ENCODE measurements at regions of chr7 and their contacts with region 1.

Region 1: GRCh38 chr7:17646253-17646956 is 293.9 kb downstream of the SNX13 start:
- DNase-seq: no peak
- ATAC-seq: no peak

Region 2: GRCh38 chr7:16982640-16983350 is 663.6 kb before region 1 on chr7:
- intact Hi-C with region 1: loop called (anchors 5 kb)
- DNase-seq: no peak
- ATAC-seq: no peak

Region 3: GRCh38 chr7:17488829-17489228 is 157.6 kb before region 1 on chr7:
- intact Hi-C with region 1: no loop called
- DNase-seq: no peak
- ATAC-seq: no peak

Region 4: GRCh38 chr7:17690030-17690429 is 43.6 kb after region 1 on chr7:
- intact Hi-C with region 1: no loop called
- DNase-seq: no peak
- ATAC-seq: no peak

Measured in Right ventricle myocardium inferior (tissue), 1 donor.